AG04450 (cell line): ENCODE measurements at regions of chr10 and their contacts with region 1.

Region 1: GRCh38 chr10:34889004-34889869 is 74.1 kb upstream of the PARD3 start:
- DNase-seq: no peak
- H3K4me3 ChIP-seq: no peak overlapping the region
- H3K27ac ChIP-seq: no peak overlapping the region
- H3K27me3 ChIP-seq: peaks cover 8% of the 10 kb centered on the region
- CTCF ChIP-seq: no peak

Region 2: GRCh38 chr10:33621101-33621500 is 1268.1 kb before region 1 on chr10:
- CTCF ChIA-PET with region 1: no interaction called
- POLR2A ChIA-PET with region 1: interaction called, 12 read pairs
- DNase-seq: no peak
- H3K4me3 ChIP-seq: no peak overlapping the region
- H3K27ac ChIP-seq: no peak overlapping the region
- H3K27me3 ChIP-seq: peaks cover 9% of the 10 kb centered on the region
- CTCF ChIP-seq: no peak